ENCODE measurements at regions of chr4 and their contacts with region 1.

Region 1: DNA sequence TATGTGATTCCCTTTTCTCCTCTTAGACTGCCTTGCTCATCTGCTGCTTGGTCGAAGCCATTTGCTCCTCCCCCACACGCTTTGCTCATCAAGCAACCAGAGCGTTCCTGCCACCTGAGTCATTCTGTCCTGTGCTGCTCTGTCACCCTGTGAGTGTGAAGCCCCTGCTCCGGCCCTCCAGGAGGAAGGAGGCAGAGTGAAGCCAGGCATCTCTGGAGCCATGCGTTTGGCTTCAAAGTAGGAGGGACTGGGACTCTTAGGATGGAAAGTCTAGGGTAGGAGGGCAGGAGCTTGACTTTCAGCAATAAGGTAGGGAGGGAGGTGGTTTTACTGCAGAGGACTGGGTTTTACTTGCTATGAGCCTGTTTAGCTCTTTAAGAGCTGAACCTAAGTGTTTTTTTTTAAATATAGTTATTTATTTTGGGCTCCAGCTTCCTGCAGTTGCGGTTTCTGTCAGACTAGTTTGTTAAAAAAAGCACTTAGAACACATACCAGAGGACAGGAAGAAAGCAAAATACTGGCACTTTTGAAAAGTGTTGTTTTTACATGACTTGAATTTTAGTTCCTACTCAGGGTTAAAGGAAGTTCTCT is 63.6 kb downstream of the SPINK2 start:
- DNase-seq: peak; percentile 91
- H3K4me3 Mint-ChIP-seq: peak overlapping the region; percentile 80
- H3K27ac Mint-ChIP-seq: peak overlapping the region; percentile 98
- H3K4me1 Mint-ChIP-seq: peaks cover 47% of the 10 kb centered on the region
- H3K27me3 Mint-ChIP-seq: peaks cover 5% of the 10 kb centered on the region

Region 2: GRCh38 chr4:54941994-54942552 is 1815.8 kb before region 1 on chr4:
- intact Hi-C with region 1: loop called (anchors 5 kb)
- DNase-seq: peak; percentile 81
- H3K4me3 Mint-ChIP-seq: peak overlapping the region; percentile 64
- H3K27ac Mint-ChIP-seq: peak overlapping the region; percentile 80
- H3K4me1 Mint-ChIP-seq: peaks cover 38% of the 10 kb centered on the region
- H3K27me3 Mint-ChIP-seq: no peaks in the 10 kb centered on the region

Region 3: DNA sequence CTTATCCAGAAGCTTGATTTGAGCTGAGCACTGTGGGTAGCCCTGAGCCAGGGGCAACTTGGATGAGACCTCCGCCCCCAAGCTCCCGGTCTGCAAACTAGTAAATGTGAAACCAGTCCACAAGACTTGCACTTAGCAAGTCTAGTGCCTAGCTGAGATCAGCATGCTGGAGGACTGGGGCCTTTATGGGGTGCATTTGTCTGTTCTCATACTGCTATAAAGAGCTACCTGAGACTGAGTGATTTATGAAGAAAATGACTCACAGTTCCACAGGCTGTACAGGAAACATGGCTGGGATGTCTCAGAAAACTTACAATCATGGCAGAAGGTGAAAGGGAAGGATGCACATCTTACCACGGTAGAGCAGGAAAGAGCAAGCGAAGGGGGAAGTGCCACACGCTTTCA is 34.7 kb before region 1 on chr4:
- intact Hi-C with region 1: loop called (anchors 1 kb)
- DNase-seq: peak; percentile 64
- H3K4me3 Mint-ChIP-seq: peak overlapping the region; percentile 9
- H3K27ac Mint-ChIP-seq: peak overlapping the region; percentile 78
- H3K4me1 Mint-ChIP-seq: peaks cover 16% of the 10 kb centered on the region
- H3K27me3 Mint-ChIP-seq: no peaks in the 10 kb centered on the region

Region 4: GRCh38 chr4:56828784-56829535 is 71.0 kb after region 1 on chr4:
- intact Hi-C with region 1: loop called (anchors 10 kb)
- DNase-seq: no peak
- H3K4me3 Mint-ChIP-seq: no peak overlapping the region
- H3K27ac Mint-ChIP-seq: peak overlapping the region; percentile 43
- H3K4me1 Mint-ChIP-seq: peaks cover 18% of the 10 kb centered on the region
- H3K27me3 Mint-ChIP-seq: peaks cover 11% of the 10 kb centered on the region

Region 5: GRCh38 chr4:57580710-57581599 is 823.0 kb after region 1 on chr4:
- intact Hi-C with region 1: no loop called
- DNase-seq: no peak
- H3K4me3 Mint-ChIP-seq: no peak overlapping the region
- H3K27ac Mint-ChIP-seq: no peak overlapping the region
- H3K4me1 Mint-ChIP-seq: no peaks in the 10 kb centered on the region
- H3K27me3 Mint-ChIP-seq: no peaks in the 10 kb centered on the region

Measured in activated CD4-positive, alpha-beta T cell treated with anti-CD3 and anti-CD28 coated beads, Interleukin-2, amount 10 ng/mL, durations not matched to agents 24 days and 14 days (primary cell).